ENCODE measurements at regions of chr14 and their contacts with region 1.

Region 1: DNA sequence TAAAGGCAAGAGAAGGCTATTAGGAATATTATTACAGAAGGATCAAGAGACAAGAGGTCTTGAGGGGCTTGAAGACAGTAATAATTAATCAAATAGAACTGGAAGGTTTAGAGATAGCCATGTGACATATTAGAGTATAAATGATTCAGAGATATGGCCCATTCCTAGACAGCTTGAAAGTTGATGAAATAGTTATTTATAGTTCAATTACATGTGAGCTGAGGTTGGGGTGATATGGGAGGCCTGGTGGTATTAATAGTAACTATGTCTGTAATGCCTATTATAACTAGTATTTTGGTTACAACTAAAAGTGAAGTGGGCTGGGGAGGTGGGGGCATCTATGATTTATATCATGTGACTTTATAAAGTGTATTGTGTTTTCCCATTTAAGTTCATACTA is 14.1 kb upstream of the MIS18BP1 start:
- DNase-seq: no peak
- ATAC-seq: no peak
- H3K4me3 Mint-ChIP-seq: no peak overlapping the region
- H3K27ac Mint-ChIP-seq: no peak overlapping the region
- H3K4me1 Mint-ChIP-seq: no peaks in the 10 kb centered on the region
- H3K27me3 Mint-ChIP-seq: peaks cover 5% of the 10 kb centered on the region

Region 2: DNA sequence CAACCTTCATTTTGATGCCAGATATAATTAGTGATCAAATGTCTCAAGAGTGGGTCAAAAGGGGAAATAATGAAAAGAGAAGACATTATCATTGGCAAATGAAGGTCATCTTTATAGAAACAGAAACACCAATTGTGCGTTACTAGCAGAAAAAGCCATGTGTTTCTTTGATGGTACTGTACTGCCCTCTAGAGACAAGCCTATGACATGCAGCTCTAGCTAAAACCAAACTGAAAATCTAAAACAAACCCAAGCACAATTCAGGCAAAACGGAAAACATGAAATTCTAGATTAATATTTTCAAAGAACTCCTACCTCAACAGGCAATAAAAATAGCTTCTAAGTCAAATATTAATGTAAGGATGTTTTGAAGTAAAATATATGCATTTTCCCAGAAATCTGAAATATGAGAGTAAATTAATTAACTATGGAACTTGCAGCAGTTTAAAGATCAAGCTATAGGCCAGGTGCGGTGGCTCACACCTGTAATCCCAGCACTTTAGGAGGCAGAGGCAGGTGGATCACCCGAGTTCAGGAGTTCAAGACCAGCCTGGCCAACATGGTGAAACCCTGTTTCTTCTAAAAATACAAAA is 420.7 kb before region 1 on chr14:
- CTCF ChIA-PET with region 1: interaction called, 3 read pairs
- POLR2A ChIA-PET with region 1: no interaction called
- intact Hi-C with region 1: loop called in 1 of 2 experiments (anchors 1 kb)
- DNase-seq: no peak
- ATAC-seq: no peak
- H3K4me3 Mint-ChIP-seq: no peak overlapping the region
- H3K27ac Mint-ChIP-seq: no peak overlapping the region
- H3K4me1 Mint-ChIP-seq: no peaks in the 10 kb centered on the region
- H3K27me3 Mint-ChIP-seq: peaks cover 2% of the 10 kb centered on the region

Region 3: DNA sequence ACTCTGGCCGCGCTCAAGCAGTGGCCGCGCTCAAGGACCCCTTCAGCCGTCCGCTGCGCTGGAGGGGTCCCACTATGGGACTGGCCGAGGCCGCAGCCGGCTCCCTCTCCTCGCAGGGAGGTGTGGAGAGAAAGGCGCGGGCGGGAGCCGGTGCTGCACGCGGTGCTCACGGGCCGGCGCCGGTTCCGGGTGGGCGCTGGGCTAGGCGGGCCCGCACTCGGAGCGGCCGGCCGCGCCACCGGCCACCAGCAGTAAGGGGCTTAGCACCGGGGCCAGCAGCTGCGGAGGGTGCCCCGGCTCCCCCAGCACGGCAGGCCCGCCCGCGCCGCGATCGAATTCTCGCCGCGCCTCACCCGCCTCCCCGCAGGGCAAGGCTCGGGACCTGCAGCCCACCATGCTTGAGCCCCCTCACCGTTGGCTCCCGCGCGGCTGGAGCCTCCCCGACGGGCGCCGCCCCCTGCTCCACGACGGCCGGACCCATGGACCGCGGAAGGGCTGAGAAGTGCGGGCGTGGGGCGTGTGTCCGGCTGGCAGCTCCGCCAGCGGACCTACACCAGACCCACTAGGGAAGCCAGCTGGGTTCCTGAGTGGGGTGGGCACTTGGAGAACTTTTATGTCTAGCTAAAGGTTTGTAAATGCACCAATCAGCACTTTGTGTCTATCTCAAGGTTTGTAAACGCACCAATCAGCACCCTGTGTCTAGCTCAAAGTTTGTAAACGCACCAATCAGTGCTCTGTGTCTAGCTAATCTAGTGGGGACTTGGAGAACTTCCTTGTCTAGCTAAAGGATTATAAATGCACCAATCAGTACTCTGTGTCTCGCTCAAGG is 354.8 kb before region 1 on chr14:
- CTCF ChIA-PET with region 1: interaction called, 8 read pairs
- POLR2A ChIA-PET with region 1: no interaction called
- intact Hi-C with region 1: loop called (anchors 1 kb)
- DNase-seq: no peak
- ATAC-seq: peak; percentile 12
- H3K4me3 Mint-ChIP-seq: no peak overlapping the region
- H3K27ac Mint-ChIP-seq: no peak overlapping the region
- H3K4me1 Mint-ChIP-seq: no peaks in the 10 kb centered on the region
- H3K27me3 Mint-ChIP-seq: peaks cover 27% of the 10 kb centered on the region

Region 4: DNA sequence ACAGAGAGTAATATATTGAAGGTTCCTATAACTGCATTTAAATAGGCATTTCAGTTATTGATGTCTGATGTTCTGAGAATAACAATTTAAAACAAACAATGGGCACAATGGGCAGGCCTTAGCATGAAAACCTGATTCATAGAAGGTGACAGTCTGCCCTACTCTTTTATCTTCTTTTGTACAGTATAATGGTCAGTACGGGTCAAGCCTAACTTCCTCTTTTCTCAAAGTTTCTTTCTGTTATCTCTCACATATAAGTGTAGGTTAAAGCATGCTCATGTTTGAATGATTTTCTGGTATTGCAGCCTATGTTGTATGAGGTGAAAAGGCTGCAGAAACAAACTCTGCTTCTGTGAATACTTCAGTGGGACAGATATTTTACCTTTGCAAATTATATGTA is 147.0 kb before region 1 on chr14:
- CTCF ChIA-PET with region 1: no interaction called
- POLR2A ChIA-PET with region 1: no interaction called
- intact Hi-C with region 1: no loop called
- DNase-seq: no peak
- ATAC-seq: no peak
- H3K4me3 Mint-ChIP-seq: no peak overlapping the region
- H3K27ac Mint-ChIP-seq: peak overlapping the region; percentile 72
- H3K4me1 Mint-ChIP-seq: peaks cover 2% of the 10 kb centered on the region
- H3K27me3 Mint-ChIP-seq: no peaks in the 10 kb centered on the region

Region 5: DNA sequence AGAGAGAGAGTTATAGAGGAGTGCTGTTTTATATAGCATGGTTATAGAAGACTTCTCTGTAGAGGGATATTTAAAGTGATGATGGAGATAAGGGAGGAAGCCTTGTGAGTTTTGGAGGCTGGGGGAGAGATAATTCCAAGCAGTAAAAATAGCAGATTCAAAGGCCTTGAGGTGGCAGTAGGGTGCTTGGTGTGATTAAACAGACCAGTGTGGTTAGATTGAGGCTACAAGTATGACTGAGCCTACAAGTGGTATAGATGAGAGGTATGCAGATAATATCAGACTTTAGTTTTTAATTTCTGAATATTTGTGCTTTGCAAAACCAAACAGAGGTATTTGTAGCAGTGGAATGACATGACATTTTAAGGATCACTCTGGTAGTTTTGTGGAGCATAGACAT is 111.0 kb before region 1 on chr14:
- CTCF ChIA-PET with region 1: interaction called, 3 read pairs
- POLR2A ChIA-PET with region 1: no interaction called
- intact Hi-C with region 1: loop called (anchors 2 to 5 kb)
- DNase-seq: no peak
- ATAC-seq: peak; percentile 76
- H3K4me3 Mint-ChIP-seq: no peak overlapping the region
- H3K27ac Mint-ChIP-seq: no peak overlapping the region
- H3K4me1 Mint-ChIP-seq: no peaks in the 10 kb centered on the region
- H3K27me3 Mint-ChIP-seq: no peaks in the 10 kb centered on the region

Measured in activated CD4-positive, alpha-beta T cell treated with anti-CD3 and anti-CD28 coated beads for 36 hours (primary cell).